IMR-90 (cell line): ENCODE measurements at regions of chr15 and their contacts with region 1.

Region 1: GRCh38 chr15:58269455-58270414 is 131.6 kb downstream of the AQP9 start:
- DNase-seq: peak; percentile 71
- ATAC-seq: peak; percentile 98
- H3K4me3 ChIP-seq: no peak overlapping the region
- H3K27ac ChIP-seq: 0 out of 2 replicates have a peak overlapping the region, but pooled peaks have one; percentile 33
- H3K4me1 ChIP-seq: no peaks in the 10 kb centered on the region
- H3K27me3 ChIP-seq: 0 out of 2 replicates have a peak, but pooled peaks cover 1% of the 10 kb centered on the region
- CTCF ChIP-seq: peak; percentile 84
- POLR2A ChIP-seq: no peak
- RAD21 ChIP-seq: peak; percentile 95

Region 2: GRCh38 chr15:58361291-58361759 is 91.6 kb after region 1 on chr15:
- CTCF ChIA-PET with region 1: interaction called, 3 read pairs
- POLR2A ChIA-PET with region 1: no interaction called
- dilution Hi-C with region 1: no loop called
- in situ Hi-C with region 1: no loop called
- intact Hi-C with region 1: loop called (anchors 1 kb)
- DNase-seq: peak; percentile 99
- ATAC-seq: peak; percentile 89
- H3K4me3 ChIP-seq: no peak overlapping the region; the same call in 1 of the 2 replicates
- H3K27ac ChIP-seq: peak overlapping the region; percentile 99
- H3K4me1 ChIP-seq: peaks cover 29% of the 10 kb centered on the region
- H3K27me3 ChIP-seq: no peaks in the 10 kb centered on the region
- CTCF ChIP-seq: no peak
- POLR2A ChIP-seq: no peak
- RAD21 ChIP-seq: peak; percentile 26

Region 3: GRCh38 chr15:58420579-58421043 is 150.9 kb after region 1 on chr15:
- CTCF ChIA-PET with region 1: no interaction called
- POLR2A ChIA-PET with region 1: no interaction called
- dilution Hi-C with region 1: no loop called
- in situ Hi-C with region 1: no loop called
- intact Hi-C with region 1: no loop called
- DNase-seq: no peak
- ATAC-seq: no peak
- H3K4me3 ChIP-seq: no peak overlapping the region
- H3K27ac ChIP-seq: no peak overlapping the region
- H3K4me1 ChIP-seq: 0 out of 2 replicates have a peak, but pooled peaks cover 1% of the 10 kb centered on the region
- H3K27me3 ChIP-seq: no peaks in the 10 kb centered on the region
- CTCF ChIP-seq: no peak
- POLR2A ChIP-seq: no peak
- RAD21 ChIP-seq: no peak

Region 4: GRCh38 chr15:58611731-58612676 is 342.3 kb after region 1 on chr15:
- CTCF ChIA-PET with region 1: no interaction called
- POLR2A ChIA-PET with region 1: no interaction called
- dilution Hi-C with region 1: no loop called
- in situ Hi-C with region 1: no loop called
- intact Hi-C with region 1: loop called (anchors 10 kb)
- DNase-seq: peak; percentile 28
- ATAC-seq: peak; percentile 28; the same call in 1 of the 2 replicates
- H3K4me3 ChIP-seq: no peak overlapping the region
- H3K27ac ChIP-seq: no peak overlapping the region
- H3K4me1 ChIP-seq: peaks cover 11% of the 10 kb centered on the region
- H3K27me3 ChIP-seq: no peaks in the 10 kb centered on the region
- CTCF ChIP-seq: no peak
- POLR2A ChIP-seq: no peak
- RAD21 ChIP-seq: no peak

Region 5: DNA sequence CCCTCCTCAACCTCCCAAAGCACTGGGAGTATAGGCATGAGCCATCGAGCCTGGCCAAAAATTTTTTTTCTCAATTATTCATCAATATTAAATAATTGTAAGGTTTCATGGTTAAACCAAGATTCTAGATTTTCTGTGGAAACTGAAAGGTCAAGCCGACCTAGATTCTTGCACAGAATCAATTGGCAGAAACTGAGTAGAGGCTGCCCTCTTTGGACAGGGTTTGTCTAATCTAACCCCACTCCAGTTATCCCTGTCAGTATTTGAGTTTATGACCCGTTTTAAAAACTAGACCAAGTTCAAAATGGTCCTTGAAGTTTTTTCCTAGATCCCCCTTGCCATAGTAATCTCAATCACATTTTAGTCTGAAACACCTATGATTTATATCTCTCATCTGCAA is 488.4 kb after region 1 on chr15:
- CTCF ChIA-PET with region 1: interaction called, 3 read pairs
- POLR2A ChIA-PET with region 1: no interaction called
- dilution Hi-C with region 1: no loop called
- in situ Hi-C with region 1: no loop called
- intact Hi-C with region 1: loop called (anchors 1 kb)
- DNase-seq: peak; percentile 33
- ATAC-seq: peak; percentile 68; the same call in 1 of the 2 replicates
- H3K4me3 ChIP-seq: no peak overlapping the region
- H3K27ac ChIP-seq: no peak overlapping the region
- H3K4me1 ChIP-seq: no peaks in the 10 kb centered on the region
- H3K27me3 ChIP-seq: no peaks in the 10 kb centered on the region
- CTCF ChIP-seq: peak; percentile 55
- POLR2A ChIP-seq: no peak
- RAD21 ChIP-seq: peak; percentile 58